CD4-positive, alpha-beta memory T cell (primary cell): ENCODE measurements at regions of chr10 and their contacts with region 1.

Region 1: DNA sequence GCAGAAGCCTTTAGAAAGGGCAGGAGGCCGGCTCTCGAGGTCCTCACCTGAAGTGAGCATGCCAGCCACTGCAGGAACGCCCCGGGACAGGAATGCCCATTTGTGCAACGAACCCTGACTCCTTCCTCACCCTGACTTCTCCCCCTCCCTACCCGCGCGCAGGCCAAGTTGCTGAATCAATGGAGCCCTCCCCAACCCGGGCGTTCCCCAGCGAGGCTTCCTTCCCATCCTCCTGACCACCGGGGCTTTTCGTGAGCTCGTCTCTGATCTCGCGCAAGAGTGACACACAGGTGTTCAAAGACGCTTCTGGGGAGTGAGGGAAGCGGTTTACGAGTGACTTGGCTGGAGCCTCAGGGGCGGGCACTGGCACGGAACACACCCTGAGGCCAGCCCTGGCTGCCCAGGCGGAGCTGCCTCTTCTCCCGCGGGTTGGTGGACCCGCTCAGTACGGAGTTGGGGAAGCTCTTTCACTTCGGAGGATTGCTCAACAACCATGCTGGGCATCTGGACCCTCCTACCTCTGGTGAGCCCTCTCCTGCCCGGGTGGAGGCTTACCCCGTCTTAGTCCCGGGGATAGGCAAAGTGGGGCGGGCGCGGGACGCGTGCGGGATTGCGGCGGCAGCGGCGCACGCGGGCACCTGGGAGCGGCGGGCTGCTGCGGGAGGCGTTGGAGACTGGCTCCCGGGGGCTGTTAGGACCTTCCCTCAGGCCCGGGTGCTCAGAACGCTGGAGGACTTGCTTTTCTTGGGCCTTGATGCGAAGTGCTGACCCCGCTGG is at the start of gene FAS:
- DNase-seq: peak; percentile 80 to 95 (median 83)
- H3K4me3 ChIP-seq: peak within 1 kb of the TSS; percentile 68 to 81
- H3K4me3 Mint-ChIP-seq: peak within 1 kb of the TSS; percentile 95 to 100 (median 99)
- H3K27ac ChIP-seq: peak within 1 kb of the TSS; percentile 93
- H3K27ac Mint-ChIP-seq: peak within 1 kb of the TSS; percentile 96 to 100 (median 97)
- H3K4me1 ChIP-seq: peaks cover 71% of the 10 kb centered on the region
- H3K4me1 Mint-ChIP-seq: peaks cover 53 to 82% (median 63%) of the 10 kb centered on the region in 4 donors
- H3K27me3 ChIP-seq: no peaks in the 10 kb centered on the region
- H3K27me3 Mint-ChIP-seq: no peaks in the 10 kb centered on the region
- total RNA-seq, gene FAS: 42.4 to 44.2 TPM

Region 2: GRCh38 chr10:87817609-87818504 is 1172.7 kb before region 1 on chr10 and contains the start of gene ATAD1:
- CTCF ChIA-PET with region 1: no interaction called
- POLR2A ChIA-PET with region 1: no interaction called
- intact Hi-C with region 1: loop called (anchors 2 kb)
- DNase-seq: peak; percentile 89 to 91 (median 91)
- H3K4me3 ChIP-seq: peak within 1 kb of the TSS; percentile 85 to 95
- H3K4me3 Mint-ChIP-seq: peak within 1 kb of the TSS; percentile 88 to 98 (median 94)
- H3K27ac ChIP-seq: peak within 1 kb of the TSS; percentile 94
- H3K27ac Mint-ChIP-seq: peak within 1 kb of the TSS; percentile 94 to 99 (median 98)
- H3K4me1 ChIP-seq: peaks cover 46% of the 10 kb centered on the region
- H3K4me1 Mint-ChIP-seq: peaks cover 27 to 43% (median 35%) of the 10 kb centered on the region in 4 donors
- H3K27me3 ChIP-seq: no peaks in the 10 kb centered on the region
- H3K27me3 Mint-ChIP-seq: no peaks in the 10 kb centered on the region
- total RNA-seq, gene ATAD1: 46.5 to 52.0 TPM

Region 3: DNA sequence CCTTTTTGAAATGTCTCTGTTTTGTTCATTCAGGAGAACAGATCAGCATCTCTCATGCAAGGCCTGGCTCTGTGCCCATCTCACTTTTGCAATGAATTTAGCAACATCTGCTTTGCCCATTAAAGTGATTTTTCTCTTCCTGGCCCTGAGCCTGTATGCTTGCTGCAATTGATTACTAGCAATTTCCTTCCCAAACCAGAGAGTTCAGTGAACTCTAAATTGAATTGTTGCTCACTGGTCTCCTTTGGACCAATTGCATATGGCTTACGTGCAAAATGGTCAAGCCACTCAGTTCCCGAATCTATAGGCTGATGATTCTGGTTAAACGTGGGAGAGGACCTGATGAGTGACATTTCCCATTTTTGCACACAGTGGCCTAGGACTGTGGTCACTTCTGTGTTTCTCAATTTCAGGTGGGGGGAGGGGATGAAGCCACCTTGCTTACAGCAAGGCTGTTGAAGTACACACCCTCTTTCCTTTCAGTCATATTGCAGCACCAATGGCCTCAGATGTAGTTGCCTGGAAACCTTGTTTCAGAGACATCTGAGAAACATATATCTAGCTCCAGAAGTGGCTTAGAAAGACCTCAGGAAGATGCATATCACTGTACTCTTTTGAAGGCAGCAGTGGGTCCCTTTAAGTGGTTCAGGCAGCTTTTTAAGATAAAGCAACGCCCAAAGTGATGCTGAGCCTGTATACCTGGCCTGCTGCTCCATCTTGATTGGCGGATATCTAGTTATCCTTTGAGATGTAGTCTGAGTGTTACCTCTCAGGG is 925.8 kb before region 1 on chr10:
- CTCF ChIA-PET with region 1: no interaction called
- POLR2A ChIA-PET with region 1: no interaction called
- intact Hi-C with region 1: no loop called
- DNase-seq: peak; percentile 47 to 81 (median 76)
- H3K4me3 ChIP-seq: no peak overlapping the region
- H3K4me3 Mint-ChIP-seq: peak overlapping the region in 7 of 8 donors; percentile 32 to 81 (median 59)
- H3K27ac ChIP-seq: no peak overlapping the region
- H3K27ac Mint-ChIP-seq: peak overlapping the region; percentile 84 to 97 (median 95)
- H3K4me1 ChIP-seq: peaks cover 43% of the 10 kb centered on the region
- H3K4me1 Mint-ChIP-seq: peaks cover 45 to 72% (median 50%) of the 10 kb centered on the region in 4 donors
- H3K27me3 ChIP-seq: no peaks in the 10 kb centered on the region
- H3K27me3 Mint-ChIP-seq: no peaks in the 10 kb centered on the region

Region 4: GRCh38 chr10:88828310-88828709 is 162.3 kb before region 1 on chr10:
- CTCF ChIA-PET with region 1: interaction called, 5 read pairs
- POLR2A ChIA-PET with region 1: interaction called, 16 read pairs
- intact Hi-C with region 1: no loop called
- DNase-seq: no peak
- H3K4me3 ChIP-seq: no peak overlapping the region
- H3K4me3 Mint-ChIP-seq: no peak overlapping the region
- H3K27ac ChIP-seq: no peak overlapping the region
- H3K27ac Mint-ChIP-seq: no peak overlapping the region
- H3K4me1 ChIP-seq: peaks cover 67% of the 10 kb centered on the region
- H3K4me1 Mint-ChIP-seq: peaks cover 46 to 80% (median 67%) of the 10 kb centered on the region in 4 donors
- H3K27me3 ChIP-seq: no peaks in the 10 kb centered on the region
- H3K27me3 Mint-ChIP-seq: no peaks in the 10 kb centered on the region

Region 5: DNA sequence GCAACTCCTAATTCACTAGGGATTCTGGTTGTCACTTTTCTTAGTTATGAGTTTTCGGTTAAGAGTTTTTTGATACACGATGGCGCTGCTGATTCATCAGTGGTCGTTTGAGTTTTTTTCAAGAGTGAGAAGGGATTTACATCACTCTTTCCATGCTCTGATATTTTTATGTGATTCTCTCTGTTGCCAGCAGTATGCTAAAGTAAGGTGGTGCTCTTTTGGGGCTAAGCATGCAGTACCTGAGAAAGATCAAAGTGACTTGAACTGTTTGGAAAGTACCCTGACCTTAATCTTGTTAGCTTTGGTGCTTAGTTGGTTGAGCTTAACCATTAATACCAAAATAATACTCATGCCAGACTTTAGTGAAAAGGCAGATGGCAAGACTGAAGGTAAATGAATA is 82.4 kb before region 1 on chr10:
- CTCF ChIA-PET with region 1: no interaction called
- POLR2A ChIA-PET with region 1: no interaction called
- intact Hi-C with region 1: no loop called
- DNase-seq: no peak
- H3K4me3 ChIP-seq: no peak overlapping the region
- H3K4me3 Mint-ChIP-seq: no peak overlapping the region
- H3K27ac ChIP-seq: no peak overlapping the region
- H3K27ac Mint-ChIP-seq: peak overlapping the region in 3 of 7 donors; percentile 14 to 68 (median 23)
- H3K4me1 ChIP-seq: no peaks in the 10 kb centered on the region
- H3K4me1 Mint-ChIP-seq: peaks cover 0 to 5% (median 3%) of the 10 kb centered on the region in 4 donors
- H3K27me3 ChIP-seq: no peaks in the 10 kb centered on the region
- H3K27me3 Mint-ChIP-seq: no peaks in the 10 kb centered on the region

Region 6: GRCh38 chr10:88962336-88962735 is 28.2 kb before region 1 on chr10:
- CTCF ChIA-PET with region 1: interaction called, 8 read pairs
- POLR2A ChIA-PET with region 1: interaction called, 31 read pairs
- intact Hi-C with region 1: loop called (anchors 2 kb)
- DNase-seq: peak in 4 of 5 donors; percentile 42 to 54 (median 44)
- H3K4me3 ChIP-seq: no peak overlapping the region
- H3K4me3 Mint-ChIP-seq: peak overlapping the region in 6 of 8 donors; percentile 12 to 80 (median 60)
- H3K27ac ChIP-seq: no peak overlapping the region
- H3K27ac Mint-ChIP-seq: peak overlapping the region in 6 of 7 donors; percentile 3 to 74 (median 26)
- H3K4me1 ChIP-seq: peaks cover 25% of the 10 kb centered on the region
- H3K4me1 Mint-ChIP-seq: peaks cover 18 to 33% (median 27%) of the 10 kb centered on the region in 4 donors
- H3K27me3 ChIP-seq: no peaks in the 10 kb centered on the region
- H3K27me3 Mint-ChIP-seq: no peaks in the 10 kb centered on the region

Region 7: GRCh38 chr10:89022734-89023133 is 32.2 kb after region 1 on chr10:
- CTCF ChIA-PET with region 1: no interaction called
- POLR2A ChIA-PET with region 1: interaction called, 15 read pairs
- intact Hi-C with region 1: no loop called
- DNase-seq: no peak
- H3K4me3 ChIP-seq: no peak overlapping the region
- H3K4me3 Mint-ChIP-seq: no peak overlapping the region
- H3K27ac ChIP-seq: no peak overlapping the region
- H3K27ac Mint-ChIP-seq: peak overlapping the region in 1 of 7 donors; percentile 77
- H3K4me1 ChIP-seq: no peaks in the 10 kb centered on the region
- H3K4me1 Mint-ChIP-seq: peaks cover 0 to 8% (median 4%) of the 10 kb centered on the region in 4 donors
- H3K27me3 ChIP-seq: no peaks in the 10 kb centered on the region
- H3K27me3 Mint-ChIP-seq: no peaks in the 10 kb centered on the region

Region 8: DNA sequence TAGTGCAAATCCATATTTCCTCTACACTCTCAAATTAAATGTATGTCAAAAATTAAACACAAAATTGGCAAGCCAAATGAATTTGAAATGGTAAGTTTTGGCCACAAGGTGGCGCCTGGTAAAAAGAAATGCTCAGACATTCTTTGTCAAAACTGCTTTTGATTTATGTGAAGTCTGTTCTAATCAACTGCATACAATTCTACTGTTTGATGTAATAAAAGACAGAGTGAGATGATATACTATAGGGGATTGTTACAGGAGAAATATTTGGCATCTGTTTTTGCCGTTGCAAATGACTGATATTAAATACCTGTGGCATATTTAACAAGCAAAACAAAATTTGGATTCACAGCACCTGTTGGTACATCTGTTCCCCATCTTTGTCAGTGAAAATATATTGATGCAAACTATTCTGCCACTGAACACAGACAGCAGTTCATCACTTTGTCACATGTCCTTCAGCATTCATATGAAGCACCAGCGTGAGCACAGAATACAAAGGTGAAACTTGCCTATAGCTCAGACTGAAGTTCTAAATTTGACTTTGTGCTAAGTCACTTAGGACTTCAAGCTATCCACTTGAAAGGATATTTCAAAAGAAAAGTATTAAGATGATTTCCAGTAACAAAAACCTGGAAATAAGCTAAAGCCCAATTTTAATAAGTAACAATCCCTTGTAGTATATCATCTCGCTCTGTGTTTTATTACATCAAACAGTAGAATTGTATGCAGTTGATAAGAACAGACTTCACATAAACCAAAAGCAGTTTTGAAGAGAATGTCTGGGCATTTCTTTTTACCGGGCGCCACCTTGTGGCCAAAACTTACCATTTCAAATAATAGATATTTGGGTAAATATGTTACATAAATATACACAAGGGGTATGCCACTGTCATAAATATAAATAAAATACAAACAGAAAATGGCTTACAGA is 226.8 kb after region 1 on chr10:
- CTCF ChIA-PET with region 1: interaction called, 16 read pairs
- POLR2A ChIA-PET with region 1: interaction called, 5 read pairs
- intact Hi-C with region 1: no loop called
- DNase-seq: peak; percentile 59 to 64 (median 61)
- H3K4me3 ChIP-seq: no peak overlapping the region
- H3K4me3 Mint-ChIP-seq: peak overlapping the region in 2 of 8 donors; percentile 29 to 67
- H3K27ac ChIP-seq: peak overlapping the region; percentile 33
- H3K27ac Mint-ChIP-seq: peak overlapping the region in 4 of 7 donors; percentile 4 to 90 (median 70)
- H3K4me1 ChIP-seq: peaks cover 7% of the 10 kb centered on the region
- H3K4me1 Mint-ChIP-seq: peaks cover 9 to 11% (median 10%) of the 10 kb centered on the region in 4 donors
- H3K27me3 ChIP-seq: no peaks in the 10 kb centered on the region
- H3K27me3 Mint-ChIP-seq: no peaks in the 10 kb centered on the region

Region 9: GRCh38 chr10:89701238-89702120 is 710.9 kb after region 1 on chr10 and contains the start of gene KIF20B:
- CTCF ChIA-PET with region 1: no interaction called
- POLR2A ChIA-PET with region 1: no interaction called
- intact Hi-C with region 1: loop called (anchors 10 kb)
- DNase-seq: peak; percentile 95 to 97 (median 96)
- H3K4me3 ChIP-seq: peak within 1 kb of the TSS; percentile 74 to 99
- H3K4me3 Mint-ChIP-seq: peak within 1 kb of the TSS; percentile 97 to 99 (median 99)
- H3K27ac ChIP-seq: peak within 1 kb of the TSS; percentile 75
- H3K27ac Mint-ChIP-seq: peak within 1 kb of the TSS; percentile 97 to 99 (median 99)
- H3K4me1 ChIP-seq: peaks cover 35% of the 10 kb centered on the region
- H3K4me1 Mint-ChIP-seq: peaks cover 21 to 53% (median 33%) of the 10 kb centered on the region in 4 donors
- H3K27me3 ChIP-seq: no peaks in the 10 kb centered on the region
- H3K27me3 Mint-ChIP-seq: no peaks in the 10 kb centered on the region
- total RNA-seq, gene KIF20B: 20.7 to 21.4 TPM